Right lobe of liver (tissue), 6 donors: ENCODE measurements at regions of chr5 and their contacts with region 1.

Region 1: DNA sequence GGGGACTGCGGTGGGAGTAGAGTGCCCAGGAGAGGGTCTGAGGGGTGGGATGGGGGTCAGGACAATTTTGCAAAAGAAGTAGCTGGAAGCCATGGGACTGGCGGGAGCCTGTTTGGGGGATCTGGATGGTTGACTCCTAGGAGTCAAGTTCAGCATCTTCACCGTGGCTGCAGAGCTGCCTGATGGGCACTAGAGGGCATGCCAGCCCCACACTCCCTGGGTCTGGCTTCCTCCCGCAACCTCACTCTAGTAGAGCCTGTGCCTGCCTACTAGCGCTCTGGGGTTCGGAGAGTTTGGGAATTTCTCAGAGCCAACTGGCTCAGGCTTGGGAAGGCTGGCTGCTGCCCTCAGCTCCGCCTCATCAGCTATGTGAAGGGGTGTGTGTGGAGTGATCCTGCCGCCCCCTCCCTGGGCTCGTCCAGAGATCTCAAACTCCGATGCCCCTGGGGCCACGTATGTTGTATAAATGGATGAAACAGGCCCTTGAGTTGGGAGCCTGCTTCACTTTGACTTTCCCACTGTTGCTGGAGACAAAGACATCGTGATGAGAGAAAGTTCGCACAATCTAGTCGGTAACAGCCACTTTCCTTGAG is 10.8 kb downstream of the TSPAN17 start:
- DNase-seq: peak; percentile 72 to 74 (median 73)
- ATAC-seq: peak; percentile 83 to 90 (median 85)
- H3K4me3 ChIP-seq: no peak overlapping the region
- H3K27ac ChIP-seq: no peak overlapping the region
- H3K4me1 ChIP-seq: peaks cover 0 to 13% (median 5%) of the 10 kb centered on the region in 4 donors
- H3K27me3 ChIP-seq: no peaks in the 10 kb centered on the region
- CTCF ChIP-seq: peak; percentile 67 to 88 (median 77)
- POLR2A ChIP-seq: no peak

Region 2: DNA sequence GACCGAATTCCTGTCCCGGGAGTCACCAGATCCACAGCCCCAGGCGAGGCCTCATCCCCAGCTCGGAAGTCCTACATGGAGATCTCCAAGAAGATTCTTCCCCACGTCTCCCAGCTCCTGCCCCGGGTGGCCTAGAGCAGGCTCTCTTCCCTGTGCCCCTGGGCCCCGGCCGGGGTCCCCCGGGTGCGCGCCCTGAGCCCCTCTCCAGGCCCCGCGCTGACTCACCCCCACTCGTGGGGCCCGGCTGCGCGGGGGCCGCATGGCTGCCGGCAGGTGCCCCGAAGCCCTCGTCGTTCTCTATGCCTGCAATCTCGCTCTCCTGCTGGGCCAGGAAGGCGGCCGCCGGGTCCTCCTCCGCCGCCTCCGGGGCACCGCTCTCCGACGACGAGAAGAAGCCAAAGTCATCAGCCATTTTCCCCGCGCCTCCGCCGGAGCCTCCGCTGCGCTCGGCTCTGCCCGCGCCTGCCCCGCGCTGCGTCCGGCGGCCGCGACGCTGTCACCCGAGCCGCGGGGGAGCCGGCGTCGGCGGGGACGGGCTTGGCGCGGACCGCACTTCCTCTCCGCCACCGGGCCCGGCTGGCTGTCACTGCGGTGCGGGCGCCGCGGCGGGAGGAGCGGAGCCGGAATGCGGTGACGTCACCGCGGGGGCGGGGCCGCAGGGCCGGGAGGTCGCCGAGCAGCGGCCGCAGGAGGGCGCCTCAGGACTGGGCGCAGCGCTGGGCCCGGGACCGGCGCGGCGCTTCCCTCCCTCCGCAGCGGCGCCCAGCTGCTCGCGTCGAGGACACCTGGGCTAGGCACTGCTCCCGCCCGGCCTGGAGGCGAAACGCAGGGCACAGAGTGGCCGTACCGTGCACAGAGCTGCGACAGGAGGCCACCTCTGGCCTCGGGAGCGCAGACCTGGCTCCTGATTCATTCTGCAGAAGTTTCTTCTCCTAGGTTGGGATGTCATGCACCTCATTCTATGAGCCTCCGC is 241.9 kb before region 1 on chr5 and contains the start of gene CLTB:
- intact Hi-C with region 1: loop called in 1 of 2 experiments (anchors 10 kb)
- DNase-seq: peak; percentile 95 to 96 (median 95)
- ATAC-seq: peak; percentile 95 to 99 (median 98)
- H3K4me3 ChIP-seq: peak within 1 kb of the TSS; percentile 81 to 95 (median 89)
- H3K27ac ChIP-seq: peak within 1 kb of the TSS; percentile 84 to 88 (median 87)
- H3K4me1 ChIP-seq: peaks cover 0 to 21% (median 2%) of the 10 kb centered on the region in 4 donors
- H3K27me3 ChIP-seq: no peaks in the 10 kb centered on the region
- CTCF ChIP-seq: peak; percentile 75 to 96 (median 87)
- POLR2A ChIP-seq: peak; percentile 98
- total RNA-seq, gene CLTB: 28.6 to 73.0 (median 31.3) TPM

Region 3: GRCh38 chr5:176429972-176430371 is 228.1 kb before region 1 on chr5:
- intact Hi-C with region 1: no loop called
- DNase-seq: no peak
- ATAC-seq: peak in 3 of 4 donors; percentile 51 to 67 (median 56)
- H3K4me3 ChIP-seq: no peak overlapping the region
- H3K27ac ChIP-seq: no peak overlapping the region
- H3K4me1 ChIP-seq: no peaks in the 10 kb centered on the region
- H3K27me3 ChIP-seq: no peaks in the 10 kb centered on the region
- CTCF ChIP-seq: peak in 2 of 4 donors; percentile 21 to 28
- POLR2A ChIP-seq: no peak

Region 4: GRCh38 chr5:176959051-176959450 is 300.9 kb after region 1 on chr5:
- intact Hi-C with region 1: loop called in 1 of 2 experiments (anchors 10 kb)
- DNase-seq: no peak
- ATAC-seq: peak; percentile 71 to 84 (median 78)
- H3K4me3 ChIP-seq: no peak overlapping the region
- H3K27ac ChIP-seq: no peak overlapping the region
- H3K4me1 ChIP-seq: peaks cover 0 to 6% (median 0%) of the 10 kb centered on the region in 4 donors
- H3K27me3 ChIP-seq: no peaks in the 10 kb centered on the region
- CTCF ChIP-seq: peak; percentile 42 to 57 (median 54)
- POLR2A ChIP-seq: no peak